Dendritic cell treated with granulocyte-macrophage colony-stimulating factor and Interleukin-4, amounts not matched to agents 40 ng/mL and 50 ng/mL, for 4 days (primary cell): ENCODE measurements at regions of chr18 and their contacts with region 1.

Region 1: GRCh38 chr18:2606335-2606734 is 35.0 kb downstream of the NDC80 start:
- H3K4me3 Mint-ChIP-seq: no peak overlapping the region
- H3K27ac Mint-ChIP-seq: peak overlapping the region; percentile 32
- H3K4me1 Mint-ChIP-seq: peaks cover 20% of the 10 kb centered on the region
- H3K27me3 Mint-ChIP-seq: no peaks in the 10 kb centered on the region

Region 2: GRCh38 chr18:2641638-2642037 is 35.3 kb after region 1 on chr18:
- intact Hi-C with region 1: loop called (anchors 5 kb)
- H3K4me3 Mint-ChIP-seq: peak overlapping the region; percentile 67
- H3K27ac Mint-ChIP-seq: peak overlapping the region; percentile 74
- H3K4me1 Mint-ChIP-seq: peaks cover 57% of the 10 kb centered on the region
- H3K27me3 Mint-ChIP-seq: no peaks in the 10 kb centered on the region